CD8-positive, alpha-beta T cell (primary cell): ENCODE measurements at regions of chr2 and their contacts with region 1.

Region 1: DNA sequence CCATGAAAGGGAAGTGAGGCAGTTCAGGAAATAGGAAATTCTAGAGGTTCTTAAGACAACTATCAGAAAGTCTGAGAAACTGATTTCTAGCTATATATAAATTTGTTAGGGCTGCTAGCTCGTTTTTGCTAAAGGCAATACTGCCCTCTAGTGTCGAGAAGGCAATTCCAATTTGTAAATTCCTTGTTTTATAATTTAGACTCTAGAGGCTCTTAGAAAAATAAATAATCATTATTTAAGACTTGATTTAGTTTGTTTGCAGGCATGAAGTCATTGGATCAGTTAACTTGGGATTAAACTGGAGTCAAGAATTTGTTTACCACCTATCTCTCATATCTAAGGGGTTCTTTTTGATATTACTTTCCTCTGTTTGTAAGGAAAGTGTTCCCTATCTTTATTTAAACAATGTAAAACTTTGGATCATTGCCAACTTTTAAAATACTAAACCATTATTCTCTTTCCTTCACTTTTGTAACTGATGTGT is 66.2 kb downstream of the ACVR2A start:
- DNase-seq: peak in 6 of 9 experiments; percentile 6 to 65 (median 32)
- ATAC-seq: no peak
- H3K4me3 ChIP-seq: no peak overlapping the region
- H3K4me3 Mint-ChIP-seq: no peak overlapping the region
- H3K27ac ChIP-seq: no peak overlapping the region
- H3K27ac Mint-ChIP-seq: no peak overlapping the region
- H3K4me1 ChIP-seq: no peaks in the 10 kb centered on the region
- H3K4me1 Mint-ChIP-seq: no peaks in the 10 kb centered on the region
- H3K27me3 ChIP-seq: no peaks in the 10 kb centered on the region
- H3K27me3 Mint-ChIP-seq: no peaks in the 10 kb centered on the region
- CTCF ChIP-seq: peak; percentile 89

Region 2: GRCh38 chr2:146734042-146734820 is 1176.8 kb before region 1 on chr2:
- CTCF ChIA-PET with region 1: interaction called, 4 read pairs
- POLR2A ChIA-PET with region 1: no interaction called
- intact Hi-C with region 1: loop called in 1 of 2 experiments (anchors 2 kb)
- DNase-seq: peak in 1 of 9 experiments; percentile 4
- ATAC-seq: no peak
- H3K4me3 ChIP-seq: no peak overlapping the region
- H3K4me3 Mint-ChIP-seq: no peak overlapping the region
- H3K27ac ChIP-seq: no peak overlapping the region
- H3K27ac Mint-ChIP-seq: no peak overlapping the region
- H3K4me1 ChIP-seq: no peaks in the 10 kb centered on the region
- H3K4me1 Mint-ChIP-seq: no peaks in the 10 kb centered on the region
- H3K27me3 ChIP-seq: no peaks in the 10 kb centered on the region
- H3K27me3 Mint-ChIP-seq: no peaks in the 10 kb centered on the region
- CTCF ChIP-seq: no peak

Region 3: GRCh38 chr2:146874260-146874658 is 1036.8 kb before region 1 on chr2:
- CTCF ChIA-PET with region 1: no interaction called
- POLR2A ChIA-PET with region 1: no interaction called
- intact Hi-C with region 1: loop called in 1 of 2 experiments (anchors 10 kb)
- DNase-seq: no peak
- ATAC-seq: no peak
- H3K4me3 ChIP-seq: no peak overlapping the region
- H3K4me3 Mint-ChIP-seq: no peak overlapping the region
- H3K27ac ChIP-seq: no peak overlapping the region
- H3K27ac Mint-ChIP-seq: no peak overlapping the region
- H3K4me1 ChIP-seq: no peaks in the 10 kb centered on the region
- H3K4me1 Mint-ChIP-seq: no peaks in the 10 kb centered on the region
- H3K27me3 ChIP-seq: no peaks in the 10 kb centered on the region
- H3K27me3 Mint-ChIP-seq: no peaks in the 10 kb centered on the region
- CTCF ChIP-seq: no peak

Region 4: DNA sequence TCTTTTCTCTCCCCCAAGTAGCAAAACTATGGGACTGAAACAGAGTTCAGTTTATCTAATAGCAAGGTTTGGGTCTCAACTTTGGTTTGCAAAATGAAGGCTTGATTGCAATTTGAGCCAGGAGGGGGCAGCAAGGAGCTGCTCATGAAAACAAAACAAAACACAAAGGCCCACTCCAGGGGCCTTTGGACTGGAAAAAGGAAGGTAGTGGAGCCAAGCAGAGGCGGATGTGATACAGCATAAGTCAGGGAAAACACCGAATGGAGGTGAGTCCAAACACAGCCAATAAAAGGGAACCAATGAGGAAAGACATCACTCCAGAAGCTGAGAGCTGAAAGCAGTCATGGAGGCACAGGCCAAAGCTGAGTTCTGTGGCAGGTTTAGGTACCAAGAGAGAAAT is 865.9 kb before region 1 on chr2:
- CTCF ChIA-PET with region 1: interaction called, 11 read pairs
- POLR2A ChIA-PET with region 1: no interaction called
- intact Hi-C with region 1: loop called (anchors 1 to 2 kb)
- DNase-seq: peak in 5 of 9 experiments; percentile 6 to 33 (median 20)
- ATAC-seq: no peak
- H3K4me3 ChIP-seq: no peak overlapping the region
- H3K4me3 Mint-ChIP-seq: no peak overlapping the region
- H3K27ac ChIP-seq: no peak overlapping the region
- H3K27ac Mint-ChIP-seq: no peak overlapping the region
- H3K4me1 ChIP-seq: no peaks in the 10 kb centered on the region
- H3K4me1 Mint-ChIP-seq: no peaks in the 10 kb centered on the region
- H3K27me3 ChIP-seq: no peaks in the 10 kb centered on the region
- H3K27me3 Mint-ChIP-seq: no peaks in the 10 kb centered on the region
- CTCF ChIP-seq: peak; percentile 10

Region 5: GRCh38 chr2:147082850-147083522 is 828.0 kb before region 1 on chr2:
- CTCF ChIA-PET with region 1: interaction called, 59 read pairs
- POLR2A ChIA-PET with region 1: interaction called, 4 read pairs
- intact Hi-C with region 1: loop called (anchors 1 kb)
- DNase-seq: peak in 6 of 9 experiments; percentile 22 to 57 (median 38)
- ATAC-seq: no peak
- H3K4me3 ChIP-seq: no peak overlapping the region
- H3K4me3 Mint-ChIP-seq: no peak overlapping the region
- H3K27ac ChIP-seq: no peak overlapping the region
- H3K27ac Mint-ChIP-seq: no peak overlapping the region
- H3K4me1 ChIP-seq: no peaks in the 10 kb centered on the region
- H3K4me1 Mint-ChIP-seq: no peaks in the 10 kb centered on the region
- H3K27me3 ChIP-seq: no peaks in the 10 kb centered on the region
- H3K27me3 Mint-ChIP-seq: no peaks in the 10 kb centered on the region
- CTCF ChIP-seq: peak; percentile 45

Region 6: GRCh38 chr2:147288131-147288530 is 622.9 kb before region 1 on chr2:
- CTCF ChIA-PET with region 1: interaction called, 3 read pairs
- POLR2A ChIA-PET with region 1: no interaction called
- intact Hi-C with region 1: loop called in 1 of 2 experiments (anchors 10 kb)
- DNase-seq: peak in 5 of 9 experiments; percentile 1 to 43 (median 27)
- ATAC-seq: no peak
- H3K4me3 ChIP-seq: no peak overlapping the region
- H3K4me3 Mint-ChIP-seq: no peak overlapping the region
- H3K27ac ChIP-seq: no peak overlapping the region
- H3K27ac Mint-ChIP-seq: no peak overlapping the region
- H3K4me1 ChIP-seq: no peaks in the 10 kb centered on the region
- H3K4me1 Mint-ChIP-seq: no peaks in the 10 kb centered on the region
- H3K27me3 ChIP-seq: no peaks in the 10 kb centered on the region
- H3K27me3 Mint-ChIP-seq: no peaks in the 10 kb centered on the region
- CTCF ChIP-seq: no peak